G401 (cell line): ENCODE measurements at regions of chr1 and their contacts with region 1.

Region 1: GRCh38 chr1:150493163-150493562 is 5.9 kb downstream of the TARS2 start:
- DNase-seq: no peak

Region 2: GRCh38 chr1:150387200-150387599 is 106.0 kb before region 1 on chr1:
- in situ Hi-C with region 1: loop called (anchors 10 kb)
- DNase-seq: no peak